Activated CD4-positive, alpha-beta memory T cell treated with anti-CD3 and anti-CD28 coated beads for 36 hours (primary cell): ENCODE measurements at regions of chr7 and their contacts with region 1.

Region 1: GRCh38 chr7:26376175-26376917 is 84.7 kb downstream of the SNX10 start:
- DNase-seq: peak; percentile 56
- H3K4me3 Mint-ChIP-seq: peak overlapping the region; percentile 73
- H3K27ac Mint-ChIP-seq: no peak overlapping the region
- H3K4me1 Mint-ChIP-seq: no peaks in the 10 kb centered on the region
- H3K27me3 Mint-ChIP-seq: peaks cover 27% of the 10 kb centered on the region

Region 2: DNA sequence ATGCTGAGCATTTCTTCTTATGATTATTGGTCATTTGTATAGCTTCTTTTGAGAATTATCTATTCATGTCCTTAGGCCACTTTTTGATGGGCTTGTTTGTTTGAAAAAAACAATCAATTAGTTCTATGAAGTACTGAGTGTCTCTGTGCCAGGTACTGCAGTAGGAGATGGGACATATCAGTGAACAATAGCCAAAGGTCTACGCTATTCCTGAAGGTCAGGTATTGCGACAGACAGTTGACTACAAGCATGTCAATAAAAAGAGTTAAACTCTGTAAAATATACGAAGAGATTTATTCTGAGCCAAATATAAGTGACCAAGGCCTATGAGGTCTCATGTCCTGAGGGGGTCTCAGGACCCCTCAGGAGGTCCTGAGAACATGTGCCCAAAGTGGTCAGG is 346.4 kb before region 1 on chr7:
- CTCF ChIA-PET with region 1: no interaction called
- POLR2A ChIA-PET with region 1: no interaction called
- intact Hi-C with region 1: no loop called
- DNase-seq: no peak
- H3K4me3 Mint-ChIP-seq: no peak overlapping the region
- H3K27ac Mint-ChIP-seq: no peak overlapping the region
- H3K4me1 Mint-ChIP-seq: no peaks in the 10 kb centered on the region
- H3K27me3 Mint-ChIP-seq: peaks cover 11% of the 10 kb centered on the region

Region 3: GRCh38 chr7:26500749-26501352 is 124.5 kb after region 1 on chr7:
- CTCF ChIA-PET with region 1: interaction called, 9 read pairs
- POLR2A ChIA-PET with region 1: no interaction called
- intact Hi-C with region 1: loop called (anchors 1 kb)
- DNase-seq: no peak
- H3K4me3 Mint-ChIP-seq: no peak overlapping the region
- H3K27ac Mint-ChIP-seq: no peak overlapping the region
- H3K4me1 Mint-ChIP-seq: no peaks in the 10 kb centered on the region
- H3K27me3 Mint-ChIP-seq: peaks cover 10% of the 10 kb centered on the region

Region 4: GRCh38 chr7:26620352-26620751 is 244.0 kb after region 1 on chr7:
- CTCF ChIA-PET with region 1: no interaction called
- POLR2A ChIA-PET with region 1: no interaction called
- intact Hi-C with region 1: no loop called
- DNase-seq: peak; percentile 28
- H3K4me3 Mint-ChIP-seq: no peak overlapping the region
- H3K27ac Mint-ChIP-seq: no peak overlapping the region
- H3K4me1 Mint-ChIP-seq: no peaks in the 10 kb centered on the region
- H3K27me3 Mint-ChIP-seq: no peaks in the 10 kb centered on the region